Activated CD8-positive, alpha-beta T cell treated with anti-CD3 and anti-CD28 coated beads for 36 hours (primary cell): ENCODE measurements at regions of chr6 and their contacts with region 1.

Region 1: GRCh38 chr6:137873273-137873762 is 6.3 kb downstream of the TNFAIP3 start:
- DNase-seq: peak; percentile 94
- ATAC-seq: peak; percentile 60
- H3K4me3 Mint-ChIP-seq: peak overlapping the region; percentile 98
- H3K27ac Mint-ChIP-seq: peak overlapping the region; percentile 95
- H3K4me1 Mint-ChIP-seq: peaks cover 54% of the 10 kb centered on the region
- H3K27me3 Mint-ChIP-seq: no peaks in the 10 kb centered on the region
- CTCF ChIP-seq: no peak

Region 2: GRCh38 chr6:137089305-137089704 is 784.0 kb before region 1 on chr6:
- CTCF ChIA-PET with region 1: no interaction called
- POLR2A ChIA-PET with region 1: no interaction called
- intact Hi-C with region 1: no loop called
- DNase-seq: no peak
- ATAC-seq: no peak
- H3K4me3 Mint-ChIP-seq: no peak overlapping the region
- H3K27ac Mint-ChIP-seq: no peak overlapping the region
- H3K4me1 Mint-ChIP-seq: peaks cover 5% of the 10 kb centered on the region
- H3K27me3 Mint-ChIP-seq: peaks cover 6% of the 10 kb centered on the region
- CTCF ChIP-seq: no peak

Region 3: DNA sequence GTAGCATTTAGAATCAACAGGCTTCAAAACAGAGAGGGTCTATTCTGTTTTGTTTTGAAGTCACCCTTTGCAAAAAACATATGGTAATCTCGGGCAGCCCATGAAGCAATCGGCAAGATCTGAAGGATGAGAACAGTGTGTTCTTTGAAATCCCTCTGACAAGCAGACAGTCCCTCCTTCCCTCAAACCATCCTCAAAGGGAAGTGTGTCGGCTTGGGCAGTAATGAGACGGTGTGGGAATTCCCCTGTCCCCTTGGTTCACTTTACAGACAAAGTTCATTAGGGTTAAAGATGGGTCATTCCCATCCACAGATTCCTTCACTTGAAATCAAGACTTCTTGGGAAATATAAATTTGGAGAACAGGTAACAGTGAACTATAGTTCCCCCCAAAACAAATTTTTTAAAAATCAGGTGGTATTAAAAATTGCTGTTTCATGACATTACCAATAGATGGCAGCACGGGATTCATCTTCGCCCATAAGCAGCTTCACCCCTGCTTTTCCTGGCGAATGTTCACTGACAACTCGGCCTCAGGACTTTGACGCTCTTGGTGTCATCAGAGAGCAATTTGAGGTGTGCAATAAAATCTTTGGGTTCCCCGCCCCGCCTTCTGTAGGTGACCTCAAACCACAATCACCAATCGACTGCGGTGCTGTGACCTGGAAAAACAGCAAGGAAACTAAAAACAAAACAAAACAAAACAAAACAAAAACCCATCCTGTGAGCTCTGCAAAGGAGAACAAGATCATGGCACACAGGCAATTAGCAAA is 165.5 kb before region 1 on chr6:
- CTCF ChIA-PET with region 1: interaction called, 43 read pairs
- POLR2A ChIA-PET with region 1: interaction called, 44 read pairs
- intact Hi-C with region 1: loop called (anchors 1 kb)
- DNase-seq: peak; percentile 89
- ATAC-seq: peak; percentile 67
- H3K4me3 Mint-ChIP-seq: peak overlapping the region; percentile 67
- H3K27ac Mint-ChIP-seq: peak overlapping the region; percentile 89
- H3K4me1 Mint-ChIP-seq: peaks cover 65% of the 10 kb centered on the region
- H3K27me3 Mint-ChIP-seq: no peaks in the 10 kb centered on the region
- CTCF ChIP-seq: peak; percentile 77

Region 4: DNA sequence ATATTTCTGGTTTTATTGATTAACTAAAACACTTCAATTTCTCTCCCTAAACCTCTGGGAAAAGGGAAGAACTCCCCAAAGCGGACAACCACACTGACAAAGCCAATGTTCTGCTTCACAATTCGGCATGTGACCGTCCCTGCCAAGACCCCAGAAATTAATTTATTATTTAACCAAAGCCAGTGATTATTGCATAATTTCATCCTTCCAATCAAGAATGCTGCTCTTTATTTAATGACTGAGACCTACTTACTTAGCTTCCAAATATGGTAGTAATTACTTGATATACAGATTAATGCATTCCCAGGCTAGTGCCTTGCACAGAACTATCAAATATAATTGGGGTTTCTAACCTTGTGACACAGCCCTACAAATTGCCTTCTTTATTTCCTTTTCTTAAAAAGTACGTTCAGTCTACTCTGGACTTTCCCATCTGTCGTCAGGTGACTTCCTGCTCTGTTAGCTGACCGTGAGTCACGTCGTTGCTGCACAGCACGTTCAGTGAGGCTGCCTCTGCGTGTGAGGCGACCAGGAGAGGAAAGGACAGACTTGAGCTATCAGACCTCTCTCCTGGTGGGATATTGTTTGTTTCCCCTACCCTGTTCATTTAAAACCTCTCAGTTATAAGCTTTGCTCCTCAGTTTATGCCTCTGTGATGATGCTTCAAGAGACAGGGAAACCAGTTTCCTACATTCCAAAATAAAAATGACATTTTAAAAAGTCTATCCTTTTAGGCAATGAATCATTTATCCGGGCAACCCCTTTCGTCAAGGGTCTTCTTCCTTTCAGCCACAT is 62.0 kb before region 1 on chr6:
- CTCF ChIA-PET with region 1: interaction called, 66 read pairs
- POLR2A ChIA-PET with region 1: interaction called, 10 read pairs
- intact Hi-C with region 1: no loop called
- DNase-seq: peak; percentile 93
- ATAC-seq: peak; percentile 89
- H3K4me3 Mint-ChIP-seq: peak overlapping the region; percentile 60
- H3K27ac Mint-ChIP-seq: peak overlapping the region; percentile 86
- H3K4me1 Mint-ChIP-seq: peaks cover 70% of the 10 kb centered on the region
- H3K27me3 Mint-ChIP-seq: no peaks in the 10 kb centered on the region
- CTCF ChIP-seq: no peak

Region 5: DNA sequence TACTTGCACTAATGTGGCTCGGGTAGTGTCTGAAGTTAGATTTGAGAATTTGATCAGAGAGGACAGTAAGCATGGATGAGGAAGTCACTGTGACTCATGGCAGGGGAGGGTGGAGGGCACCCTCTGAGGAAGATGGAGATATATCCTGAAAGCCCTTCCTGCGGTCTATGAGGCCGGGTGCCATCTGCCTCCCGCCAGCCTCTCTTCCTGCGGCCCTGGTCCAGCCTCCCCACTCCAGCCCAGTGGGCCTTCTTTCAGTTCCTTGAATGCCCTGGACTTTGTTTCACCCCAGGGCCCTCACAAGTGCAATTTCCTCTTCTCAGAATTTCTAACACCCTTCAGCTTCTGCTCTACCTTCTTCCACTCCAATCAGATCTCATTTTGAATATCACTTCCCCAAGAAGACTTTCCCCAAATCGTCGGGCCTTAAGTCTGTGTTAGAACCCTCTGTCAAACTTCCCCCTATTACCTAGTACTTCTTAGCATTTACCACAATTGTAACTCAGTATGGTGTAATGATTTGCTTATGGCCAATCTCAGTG is 26.5 kb before region 1 on chr6:
- CTCF ChIA-PET with region 1: no interaction called
- POLR2A ChIA-PET with region 1: no interaction called
- intact Hi-C with region 1: no loop called
- DNase-seq: peak; percentile 24
- ATAC-seq: peak; percentile 45
- H3K4me3 Mint-ChIP-seq: no peak overlapping the region
- H3K27ac Mint-ChIP-seq: no peak overlapping the region
- H3K4me1 Mint-ChIP-seq: peaks cover 24% of the 10 kb centered on the region
- H3K27me3 Mint-ChIP-seq: no peaks in the 10 kb centered on the region
- CTCF ChIP-seq: no peak

Region 6: DNA sequence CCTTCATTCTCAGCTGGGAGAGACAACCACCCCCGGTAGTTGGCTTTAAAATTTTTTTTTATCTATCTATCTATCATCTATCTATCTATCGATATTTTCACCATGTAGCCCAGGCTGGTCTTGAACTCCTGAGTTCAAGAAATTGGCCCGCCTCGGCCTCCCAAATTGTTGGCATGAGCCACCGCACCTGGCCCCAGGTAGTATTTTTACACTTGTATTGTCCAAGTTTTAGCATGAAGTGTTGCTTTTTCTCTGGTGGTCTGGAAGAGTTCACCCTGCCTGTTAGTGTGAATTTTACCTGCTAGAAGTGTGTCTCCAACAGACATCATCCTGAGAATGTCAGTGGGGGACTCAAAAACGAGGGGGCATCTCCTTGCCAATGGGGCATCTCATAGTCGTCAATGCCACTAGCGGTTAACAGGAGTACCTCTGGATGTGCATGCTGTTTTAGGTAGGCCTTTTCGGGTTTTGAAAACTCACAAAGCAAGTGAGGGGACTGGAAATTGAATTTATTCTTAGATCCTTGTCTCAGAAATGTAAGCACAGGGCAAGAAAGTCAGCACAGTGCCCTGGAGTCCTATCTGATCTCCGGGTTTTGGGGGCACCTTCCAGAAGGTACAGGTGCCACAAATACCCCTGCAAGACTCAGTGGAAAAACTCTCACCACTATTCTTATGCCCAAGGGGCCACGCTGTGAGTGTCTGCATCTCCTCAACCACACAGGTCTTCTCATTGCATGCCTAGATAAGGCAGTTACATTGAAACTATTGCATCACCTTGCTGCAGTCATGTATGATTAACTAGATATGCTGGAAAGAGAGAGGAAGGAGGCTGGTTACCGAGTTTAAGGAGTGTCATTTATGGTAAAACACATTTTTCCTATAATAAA is 30.9 kb after region 1 on chr6:
- CTCF ChIA-PET with region 1: interaction called, 10 read pairs
- POLR2A ChIA-PET with region 1: interaction called, 3 read pairs
- intact Hi-C with region 1: loop called (anchors 2 kb)
- DNase-seq: peak; percentile 78
- ATAC-seq: peak; percentile 67
- H3K4me3 Mint-ChIP-seq: peak overlapping the region; percentile 67
- H3K27ac Mint-ChIP-seq: peak overlapping the region; percentile 99
- H3K4me1 Mint-ChIP-seq: peaks cover 57% of the 10 kb centered on the region
- H3K27me3 Mint-ChIP-seq: no peaks in the 10 kb centered on the region
- CTCF ChIP-seq: no peak

Region 7: GRCh38 chr6:137933696-137934095 is 60.4 kb after region 1 on chr6:
- CTCF ChIA-PET with region 1: interaction called, 360 read pairs
- POLR2A ChIA-PET with region 1: interaction called, 4 read pairs
- intact Hi-C with region 1: no loop called
- DNase-seq: no peak
- ATAC-seq: no peak
- H3K4me3 Mint-ChIP-seq: no peak overlapping the region
- H3K27ac Mint-ChIP-seq: peak overlapping the region; percentile 49
- H3K4me1 Mint-ChIP-seq: peaks cover 45% of the 10 kb centered on the region
- H3K27me3 Mint-ChIP-seq: no peaks in the 10 kb centered on the region
- CTCF ChIP-seq: no peak

Region 8: DNA sequence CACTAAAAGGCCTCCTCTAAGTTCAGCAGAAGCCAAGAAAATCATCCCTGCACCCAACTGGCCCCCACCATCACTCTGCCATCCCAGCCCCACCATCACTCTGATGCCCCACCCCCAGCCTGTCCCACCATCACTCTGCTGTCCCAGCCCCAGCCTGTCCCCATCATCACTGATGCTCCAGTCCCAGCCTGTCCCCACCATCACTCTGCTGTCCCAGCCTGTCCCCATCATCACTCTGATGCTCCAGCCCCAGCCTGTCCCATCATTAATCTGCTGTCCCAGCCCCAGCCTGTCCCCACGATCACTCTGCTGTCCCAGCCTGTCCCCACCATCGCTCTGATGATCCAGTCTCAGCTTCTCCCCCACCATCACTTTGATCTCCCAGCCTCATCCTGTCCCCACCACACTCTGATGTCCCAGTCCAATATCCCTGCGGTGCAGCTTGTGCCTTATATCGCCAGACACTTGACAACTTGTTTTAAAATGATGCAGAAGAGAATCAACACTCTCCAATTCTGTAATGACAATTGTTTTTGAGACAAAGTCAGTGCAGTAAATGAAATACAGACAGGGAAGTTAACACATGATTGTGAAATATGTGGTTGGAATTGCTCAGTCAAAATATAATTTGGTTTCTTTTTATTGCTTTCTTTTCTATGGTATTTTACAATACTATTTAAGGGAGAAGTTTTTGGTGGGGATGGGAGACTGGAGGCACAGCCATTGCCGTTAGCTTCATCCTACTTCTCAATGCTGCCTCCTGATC is 94.6 kb after region 1 on chr6:
- CTCF ChIA-PET with region 1: interaction called, 35 read pairs
- POLR2A ChIA-PET with region 1: interaction called, 8 read pairs
- intact Hi-C with region 1: no loop called
- DNase-seq: no peak
- ATAC-seq: no peak
- H3K4me3 Mint-ChIP-seq: no peak overlapping the region
- H3K27ac Mint-ChIP-seq: peak overlapping the region; percentile 92
- H3K4me1 Mint-ChIP-seq: peaks cover 56% of the 10 kb centered on the region
- H3K27me3 Mint-ChIP-seq: no peaks in the 10 kb centered on the region
- CTCF ChIP-seq: no peak